Naive thymus-derived CD4-positive, alpha-beta T cell (primary cell): ENCODE measurements at regions of chr11 and their contacts with region 1.

Region 1: DNA sequence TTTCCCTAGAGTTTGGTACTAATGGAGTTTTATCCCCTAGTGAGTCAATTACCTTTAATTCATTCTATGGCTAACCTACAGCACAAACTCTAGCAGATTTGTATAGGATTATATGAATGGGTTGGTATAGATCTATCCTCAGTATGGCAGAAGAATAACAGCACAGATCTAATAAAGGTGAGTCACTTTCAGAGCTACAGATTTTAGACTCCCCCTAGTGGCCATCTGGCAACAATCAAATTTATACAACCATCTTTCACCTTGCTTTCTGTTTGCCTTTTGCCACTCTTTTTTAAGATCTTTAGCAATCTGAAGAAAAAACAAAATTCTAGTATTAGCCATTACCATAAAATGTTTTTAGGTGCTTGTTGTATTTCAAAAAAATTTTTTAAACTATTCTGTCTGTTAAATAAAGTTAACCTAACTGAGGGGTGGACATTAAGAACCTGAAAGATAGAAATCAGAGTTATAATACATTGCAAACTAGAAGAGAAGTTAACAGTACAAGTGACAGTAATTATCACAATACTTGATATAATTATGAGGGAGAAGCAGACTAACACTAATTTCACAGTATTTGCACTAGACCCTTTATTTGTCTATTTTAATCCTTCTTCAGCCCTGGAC is 25.8 kb downstream of the DDIAS start:
- DNase-seq: peak in 7 of 9 donors; percentile 51 to 77 (median 67)
- ATAC-seq: peak; percentile 89
- H3K4me3 ChIP-seq: no peak overlapping the region
- H3K4me3 Mint-ChIP-seq: peak overlapping the region in 2 of 10 donors; percentile 10 to 63
- H3K27ac ChIP-seq: no peak overlapping the region
- H3K27ac Mint-ChIP-seq: peak overlapping the region in 8 of 9 donors; percentile 26 to 76 (median 52)
- H3K4me1 ChIP-seq: peaks cover 0 to 23% of the 10 kb centered on the region in 2 donors
- H3K4me1 Mint-ChIP-seq: peaks cover 10 to 55% (median 45%) of the 10 kb centered on the region in 7 donors
- H3K27me3 ChIP-seq: no peaks in the 10 kb centered on the region
- H3K27me3 Mint-ChIP-seq: no peaks in the 10 kb centered on the region

Region 2: DNA sequence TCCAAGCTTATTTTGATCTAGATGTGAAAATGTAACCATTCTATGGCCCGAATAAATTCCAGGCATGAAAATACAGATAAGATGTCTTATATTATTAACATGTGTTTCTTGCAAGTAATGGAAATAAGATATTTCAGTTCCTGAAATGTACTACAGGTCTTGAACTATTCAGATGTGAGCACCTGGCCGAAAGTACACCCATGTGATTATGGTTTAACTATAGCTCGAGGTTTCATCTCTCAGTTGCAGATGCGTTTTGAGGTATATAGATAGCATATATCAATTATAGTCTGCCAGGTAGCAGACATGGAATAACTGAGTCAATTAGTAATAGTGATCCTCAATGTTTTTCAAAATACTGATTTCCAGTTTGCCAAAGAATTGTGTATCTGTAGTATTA is 42.4 kb after region 1 on chr11:
- CTCF ChIA-PET with region 1: interaction called, 5 read pairs
- POLR2A ChIA-PET with region 1: interaction called, 8 read pairs
- intact Hi-C with region 1: loop called in 1 of 2 experiments (anchors 1 kb)
- DNase-seq: peak in 2 of 9 donors; percentile 25 to 34
- ATAC-seq: no peak
- H3K4me3 ChIP-seq: no peak overlapping the region
- H3K4me3 Mint-ChIP-seq: peak overlapping the region in 7 of 10 donors; percentile 42 to 73 (median 58)
- H3K27ac ChIP-seq: no peak overlapping the region
- H3K27ac Mint-ChIP-seq: peak overlapping the region in 8 of 9 donors; percentile 68 to 93 (median 86)
- H3K4me1 ChIP-seq: peaks cover 6 to 13% of the 10 kb centered on the region in 2 donors
- H3K4me1 Mint-ChIP-seq: peaks cover 13 to 67% (median 58%) of the 10 kb centered on the region in 7 donors
- H3K27me3 ChIP-seq: no peaks in the 10 kb centered on the region
- H3K27me3 Mint-ChIP-seq: peaks cover 0 to 18% (median 0%) of the 10 kb centered on the region in 5 donors